ENCODE measurements at regions of chr6 and their contacts with region 1.

Region 1: DNA sequence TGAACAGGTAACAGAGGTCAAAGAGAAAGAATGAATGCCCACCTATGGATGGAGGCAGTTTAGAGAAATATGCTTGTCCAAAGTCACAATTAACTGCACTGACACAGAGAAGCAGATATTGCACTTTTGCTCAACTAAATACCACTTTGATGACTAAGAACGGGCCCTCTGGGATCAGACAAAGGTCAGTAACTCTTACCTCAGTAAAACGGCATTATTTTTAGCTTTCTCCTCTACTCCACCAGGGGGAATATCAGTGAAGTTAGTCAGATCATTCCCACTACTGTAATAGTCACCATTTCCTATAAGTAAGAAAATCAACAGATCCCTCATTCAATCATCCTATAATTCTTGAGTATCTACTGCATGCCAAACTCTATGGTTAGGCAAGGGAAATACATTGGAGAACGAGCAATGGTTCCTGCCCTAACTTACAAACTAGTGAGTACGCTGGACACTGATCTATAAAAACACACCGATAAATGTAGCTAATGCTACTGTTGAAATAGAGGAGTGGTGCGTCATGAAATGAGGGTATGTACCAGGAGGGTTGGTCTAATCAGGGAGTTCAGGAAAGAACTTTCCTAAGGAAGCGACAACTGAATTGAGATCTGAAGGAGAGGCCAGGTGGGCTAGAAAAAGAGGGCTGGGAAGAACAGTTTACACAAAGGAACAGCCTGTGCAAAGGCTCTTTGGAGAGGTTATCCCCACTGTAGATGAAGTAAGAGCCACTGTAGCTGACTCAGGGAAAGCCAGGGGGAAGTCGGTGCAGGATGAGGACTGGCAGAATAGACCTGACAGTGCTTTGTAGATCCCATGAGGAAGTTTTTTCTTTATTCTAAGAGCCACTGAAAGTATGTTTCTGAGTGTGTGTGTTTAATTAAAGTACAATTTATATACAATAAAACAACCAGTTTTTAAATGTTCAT is 9.2 kb downstream of the ECI2 start:
- DNase-seq: peak; percentile 84
- ATAC-seq: peak; percentile 94
- H3K4me3 ChIP-seq: no peak overlapping the region; a peak in 1 of 6 replicates
- H3K27ac ChIP-seq: peak overlapping the region; percentile 11
- H3K4me1 ChIP-seq: peaks cover 34% of the 10 kb centered on the region
- H3K27me3 ChIP-seq: no peaks in the 10 kb centered on the region
- CTCF ChIP-seq: peak; percentile 44
- EP300 ChIP-seq: no peak
- POLR2A ChIP-seq: no peak
- RAD21 ChIP-seq: no peak

Region 2: GRCh38 chr6:4085332-4085700 is 40.9 kb before region 1 on chr6:
- CTCF ChIA-PET with region 1: no interaction called
- POLR2A ChIA-PET with region 1: no interaction called
- in situ Hi-C with region 1: no loop called
- intact Hi-C with region 1: no loop called
- DNase-seq: no peak
- ATAC-seq: no peak
- H3K4me3 ChIP-seq: no peak overlapping the region
- H3K27ac ChIP-seq: no peak overlapping the region
- H3K4me1 ChIP-seq: peaks cover 21% of the 10 kb centered on the region
- H3K27me3 ChIP-seq: peaks cover 0 to 7% of the 10 kb centered on the region in 2 experiments; a peak in 4 of 5 replicates
- CTCF ChIP-seq: no peak
- EP300 ChIP-seq: no peak
- POLR2A ChIP-seq: no peak
- RAD21 ChIP-seq: no peak

Region 3: DNA sequence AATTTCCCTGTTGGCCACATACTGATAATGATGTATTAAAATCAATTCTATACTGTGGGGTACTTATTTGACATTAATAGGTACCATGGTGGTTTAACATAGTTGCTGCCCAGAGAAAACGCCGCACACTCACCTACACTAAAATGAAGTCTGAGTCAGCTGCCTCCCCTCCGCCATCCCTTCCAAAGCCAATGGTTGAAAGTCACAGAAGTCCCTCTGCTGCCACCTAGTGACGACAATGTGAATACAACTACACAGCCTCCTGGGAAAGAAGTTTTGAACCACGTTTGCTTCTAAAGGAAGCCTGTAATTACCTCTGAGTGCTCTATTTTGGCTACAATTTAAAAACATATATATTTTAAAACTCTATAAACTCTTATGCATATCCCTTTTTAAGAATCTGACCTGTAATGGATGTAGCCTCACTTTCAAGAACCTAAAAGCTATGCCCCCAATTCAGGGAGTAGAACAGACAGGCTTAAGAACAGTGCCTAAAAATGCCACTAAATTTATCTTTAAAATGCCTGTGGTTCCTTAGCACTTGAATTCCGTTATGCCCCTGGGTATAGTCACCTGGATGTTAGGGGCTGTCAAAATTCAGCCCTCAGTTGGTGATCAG is 29.8 kb after region 1 on chr6:
- CTCF ChIA-PET with region 1: interaction called, 27 read pairs
- POLR2A ChIA-PET with region 1: no interaction called
- in situ Hi-C with region 1: no loop called
- intact Hi-C with region 1: loop called (anchors 1 kb)
- DNase-seq: peak; percentile 84
- ATAC-seq: peak; percentile 95
- H3K4me3 ChIP-seq: no peak overlapping the region
- H3K27ac ChIP-seq: no peak overlapping the region
- H3K4me1 ChIP-seq: peaks cover 5% of the 10 kb centered on the region; the same call in 1 of the 2 replicates
- H3K27me3 ChIP-seq: peaks cover 2 to 24% of the 10 kb centered on the region in 2 experiments; a peak in 3 of 5 replicates
- CTCF ChIP-seq: peak; percentile 93
- EP300 ChIP-seq: no peak
- POLR2A ChIP-seq: no peak
- RAD21 ChIP-seq: peak; percentile 85

Measured in HepG2 (cell line).